Esophagus squamous epithelium (tissue), 5 donors: ENCODE measurements at regions of chr7 and their contacts with region 1.

Region 1: DNA sequence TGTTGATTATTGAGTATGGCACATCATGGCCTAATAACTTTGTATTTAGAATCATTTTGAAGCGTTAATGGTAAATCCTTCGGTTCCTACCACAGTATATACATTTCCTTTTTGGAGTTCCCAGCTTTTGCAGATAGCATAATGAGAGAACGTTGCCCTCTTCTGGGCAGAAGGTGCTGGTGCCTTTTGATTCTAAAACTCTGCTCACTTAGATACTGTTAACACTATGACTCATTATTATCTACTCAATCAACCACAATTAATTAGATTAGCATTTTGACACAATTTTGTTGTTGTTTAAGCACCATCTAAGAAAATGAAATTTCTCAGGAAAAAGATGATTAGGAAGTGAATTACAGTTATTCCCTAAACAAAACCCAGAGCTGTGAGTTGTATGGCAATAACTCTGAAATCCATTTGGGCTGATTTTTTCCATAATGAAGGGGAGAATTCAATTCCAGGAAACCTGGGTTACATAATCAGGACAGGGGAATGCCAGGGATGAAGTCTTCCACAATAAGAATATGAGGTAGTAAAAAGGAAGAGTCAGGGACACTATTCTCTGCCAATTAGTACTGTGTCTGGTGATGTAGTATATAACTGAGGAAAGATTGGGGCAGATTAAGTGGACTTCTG is 11.5 kb upstream of the DLD start:
- DNase-seq: no peak
- H3K4me3 ChIP-seq: no peak overlapping the region
- H3K27ac ChIP-seq: no peak overlapping the region
- H3K4me1 ChIP-seq: no peaks in the 10 kb centered on the region
- H3K27me3 ChIP-seq: no peaks in the 10 kb centered on the region
- CTCF ChIP-seq: peak in 5 of 6 experiments; percentile 44 to 82 (median 64)
- POLR2A ChIP-seq: no peak

Region 2: GRCh38 chr7:107594961-107595737 is 284.4 kb before region 1 on chr7:
- intact Hi-C with region 1: no loop called
- DNase-seq: no peak
- H3K4me3 ChIP-seq: no peak overlapping the region
- H3K27ac ChIP-seq: peak overlapping the region in 3 of 4 donors; percentile 11 to 45 (median 22)
- H3K4me1 ChIP-seq: no peaks in the 10 kb centered on the region
- H3K27me3 ChIP-seq: no peaks in the 10 kb centered on the region
- CTCF ChIP-seq: no peak
- POLR2A ChIP-seq: no peak

Region 3: GRCh38 chr7:107743567-107744344 is 135.8 kb before region 1 on chr7 and contains the start of gene CBLL1:
- intact Hi-C with region 1: loop called (anchors 10 kb)
- DNase-seq: peak; percentile 84
- H3K4me3 ChIP-seq: peak within 1 kb of the TSS; percentile 69 to 85 (median 80)
- H3K27ac ChIP-seq: peak within 1 kb of the TSS; percentile 86 to 96 (median 95)
- H3K4me1 ChIP-seq: peaks cover 14 to 51% (median 34%) of the 10 kb centered on the region in 3 donors
- H3K27me3 ChIP-seq: no peaks in the 10 kb centered on the region
- CTCF ChIP-seq: peak; percentile 42 to 69 (median 68)
- POLR2A ChIP-seq: peak in 3 of 4 donors; percentile 37 to 70 (median 67)
- total RNA-seq, gene CBLL1: 9.6 to 28.8 (median 14.5) TPM

Region 4: DNA sequence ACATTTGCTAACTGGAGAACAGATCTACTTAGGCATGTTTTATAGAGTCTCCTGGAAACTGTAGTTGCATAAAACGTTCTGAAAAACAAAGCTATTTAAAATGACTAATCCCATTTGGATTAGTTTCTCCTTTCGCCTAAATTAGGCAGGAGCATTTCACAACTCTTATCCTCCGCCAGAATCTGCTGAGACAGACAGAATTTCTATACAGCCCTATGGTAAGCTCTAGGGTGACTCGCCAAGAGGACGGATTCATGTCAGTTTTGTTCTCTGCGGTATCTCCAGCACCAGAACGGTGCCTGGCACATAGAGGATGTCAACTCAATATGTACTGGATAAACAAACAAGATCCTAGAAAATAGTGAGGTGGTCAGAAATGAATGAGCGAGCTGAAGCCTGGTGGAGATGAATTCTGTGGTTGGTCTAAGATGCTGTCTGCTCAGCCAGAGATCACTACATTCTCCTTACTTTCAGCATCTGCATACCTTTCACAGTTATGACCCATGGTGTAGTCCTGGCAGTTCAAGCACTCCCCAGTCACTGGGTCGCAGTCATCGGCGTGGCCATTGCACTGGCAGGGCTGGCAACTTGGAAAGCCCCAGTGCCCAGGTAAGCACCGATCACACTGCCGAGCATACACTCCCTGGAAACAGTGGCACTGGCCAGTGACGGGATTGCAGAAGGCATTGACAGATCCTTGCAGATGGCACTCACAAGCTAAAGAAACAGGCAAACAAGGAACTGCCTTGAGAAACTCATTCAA is 79.4 kb after region 1 on chr7:
- intact Hi-C with region 1: no loop called
- DNase-seq: no peak
- H3K4me3 ChIP-seq: no peak overlapping the region
- H3K27ac ChIP-seq: peak overlapping the region in 3 of 4 donors; percentile 66 to 89 (median 67)
- H3K4me1 ChIP-seq: peaks cover 11 to 40% (median 16%) of the 10 kb centered on the region in 3 donors
- H3K27me3 ChIP-seq: no peaks in the 10 kb centered on the region
- CTCF ChIP-seq: no peak
- POLR2A ChIP-seq: no peak

Region 5: DNA sequence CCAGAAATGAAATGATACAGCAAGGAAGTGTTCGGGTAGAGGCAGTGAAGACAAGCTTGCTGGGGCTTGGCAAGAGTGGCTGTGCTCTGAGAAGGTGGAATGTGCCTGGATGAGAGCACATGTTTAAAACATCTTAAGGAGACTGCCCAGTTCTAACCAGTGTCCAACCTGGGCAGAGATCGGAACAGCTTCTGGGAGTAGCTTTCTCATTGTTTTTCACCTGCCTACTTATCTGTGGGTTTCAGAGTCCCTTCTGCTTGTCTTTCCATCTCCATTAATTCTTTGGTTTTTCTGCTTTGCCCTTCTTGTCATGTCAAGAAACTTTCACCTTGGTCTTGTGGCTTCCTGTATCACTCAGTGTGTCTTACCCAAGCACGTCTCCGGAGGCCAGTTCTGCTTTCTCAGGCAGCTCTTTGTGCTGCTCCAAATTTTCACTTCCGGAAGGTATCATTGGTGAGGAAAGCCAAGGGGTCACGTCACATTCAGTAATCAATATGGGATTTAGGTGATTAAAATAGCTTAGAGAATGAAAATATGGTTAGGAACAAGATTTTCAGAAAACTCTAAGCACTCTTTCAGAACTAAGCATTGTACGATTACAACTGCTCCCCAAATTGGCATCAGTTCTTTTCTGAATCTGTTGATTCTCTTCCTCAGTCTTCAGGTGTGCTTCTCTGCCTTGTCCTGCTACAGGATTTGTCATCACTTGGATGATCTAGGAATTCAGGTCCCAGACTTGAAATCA is 256.1 kb after region 1 on chr7:
- intact Hi-C with region 1: loop called (anchors 10 kb)
- DNase-seq: no peak
- H3K4me3 ChIP-seq: no peak overlapping the region
- H3K27ac ChIP-seq: no peak overlapping the region
- H3K4me1 ChIP-seq: peaks cover 0 to 56% (median 10%) of the 10 kb centered on the region in 3 donors
- H3K27me3 ChIP-seq: no peaks in the 10 kb centered on the region
- CTCF ChIP-seq: no peak
- POLR2A ChIP-seq: no peak